A549 (cell line): ENCODE measurements at regions of chr3 and their contacts with region 1.

Region 1: GRCh38 chr3:11335056-11335608 is 62.9 kb downstream of the ATG7 start:
- DNase-seq: peak; percentile 55 to 66
- ATAC-seq: peak; percentile 93 to 94
- H3K4me3 ChIP-seq: no peak overlapping the region
- H3K27ac ChIP-seq: 0 out of 6 replicates have a peak overlapping the region, but pooled peaks of 1 of the 2 experiments have one; percentile 7
- H3K4me1 ChIP-seq: no peaks in the 10 kb centered on the region; the same call in 2 of the 3 replicates
- CTCF ChIP-seq: peak; percentile 86
- EP300 ChIP-seq: no peak
- POLR2A ChIP-seq: no peak
- RAD21 ChIP-seq: peak; percentile 80 to 85

Region 2: DNA sequence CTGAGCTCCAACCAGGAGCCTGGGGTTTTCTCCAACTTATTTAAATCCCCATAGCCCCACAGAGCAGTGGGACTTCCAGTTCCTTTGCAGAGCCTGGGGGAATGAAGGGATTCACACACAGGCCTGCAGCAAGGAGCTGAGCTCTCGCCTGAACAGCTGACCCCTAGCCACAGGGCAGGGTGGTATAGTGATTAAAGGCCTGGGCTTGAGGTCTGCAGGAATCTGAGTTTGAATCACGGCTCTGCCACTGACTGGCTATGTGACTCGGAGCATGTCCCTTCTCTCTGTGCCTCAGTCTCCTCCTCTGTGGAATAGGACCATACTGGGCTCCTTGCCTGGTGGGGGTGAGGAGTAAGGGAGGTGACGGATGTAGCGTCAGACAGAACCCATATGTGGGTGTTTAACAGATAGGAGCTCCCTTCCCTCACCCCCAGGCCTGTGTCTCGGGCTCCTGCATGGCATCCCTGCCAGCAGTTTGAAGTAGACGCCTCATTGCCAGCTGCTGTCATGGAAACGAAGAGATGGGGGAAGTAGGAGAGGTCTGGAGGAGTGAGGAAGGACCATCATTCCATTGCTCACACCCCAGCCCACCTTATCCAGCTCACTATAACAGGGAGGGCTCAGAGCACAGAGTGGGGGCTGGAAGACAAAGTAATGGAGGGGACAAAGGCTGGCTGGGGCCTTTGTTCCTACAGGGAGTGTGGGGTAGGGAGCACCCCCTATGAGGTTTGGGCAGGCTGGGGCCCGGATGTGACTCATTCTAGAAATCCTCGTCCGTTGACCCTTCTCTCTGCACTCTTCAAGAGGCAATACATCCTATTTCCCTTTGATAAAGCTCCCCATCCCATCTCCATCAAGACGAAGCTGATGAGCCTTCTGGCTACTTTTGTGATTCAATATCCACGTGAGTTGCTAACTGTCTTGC is 166.0 kb before region 1 on chr3:
- CTCF ChIA-PET with region 1: interaction called, 19 read pairs
- POLR2A ChIA-PET with region 1: no interaction called
- DNase-seq: no peak
- ATAC-seq: no peak; a peak in 1 of 6 replicates
- H3K4me3 ChIP-seq: no peak overlapping the region
- H3K27ac ChIP-seq: no peak overlapping the region
- H3K4me1 ChIP-seq: no peaks in the 10 kb centered on the region
- CTCF ChIP-seq: no peak
- EP300 ChIP-seq: no peak
- POLR2A ChIP-seq: no peak
- RAD21 ChIP-seq: no peak

Region 3: GRCh38 chr3:11244126-11244677 is 90.9 kb before region 1 on chr3:
- CTCF ChIA-PET with region 1: interaction called, 45 read pairs
- POLR2A ChIA-PET with region 1: no interaction called
- DNase-seq: peak in 1 of 2 experiments; percentile 26
- ATAC-seq: peak; percentile 73 to 80; a peak in 5 of 6 replicates
- H3K4me3 ChIP-seq: no peak overlapping the region
- H3K27ac ChIP-seq: no peak overlapping the region
- H3K4me1 ChIP-seq: peaks cover 8% of the 10 kb centered on the region
- CTCF ChIP-seq: no peak
- EP300 ChIP-seq: no peak
- POLR2A ChIP-seq: no peak
- RAD21 ChIP-seq: no peak

Region 4: GRCh38 chr3:11323813-11324212 is 11.3 kb before region 1 on chr3:
- CTCF ChIA-PET with region 1: interaction called, 49 read pairs
- POLR2A ChIA-PET with region 1: no interaction called
- DNase-seq: no peak
- ATAC-seq: no peak
- H3K4me3 ChIP-seq: no peak overlapping the region
- H3K27ac ChIP-seq: no peak overlapping the region
- H3K4me1 ChIP-seq: no peaks in the 10 kb centered on the region
- CTCF ChIP-seq: no peak
- EP300 ChIP-seq: no peak
- POLR2A ChIP-seq: no peak
- RAD21 ChIP-seq: no peak